Brain microvascular endothelial cell (primary cell): ENCODE measurements at regions of chr11 and their contacts with region 1.

Region 1: GRCh38 chr11:128624269-128625175 is 37.2 kb upstream of the ETS1 start:
- DNase-seq: no peak
- H3K4me3 ChIP-seq: no peak overlapping the region
- H3K27ac ChIP-seq: no peak overlapping the region
- H3K27me3 ChIP-seq: no peaks in the 10 kb centered on the region
- CTCF ChIP-seq: no peak

Region 2: GRCh38 chr11:128522055-128522942 is 102.2 kb before region 1 on chr11:
- in situ Hi-C with region 1: loop called (anchors 10 kb)
- DNase-seq: peak; percentile 99
- H3K4me3 ChIP-seq: peak overlapping the region; percentile 89
- H3K27ac ChIP-seq: peak overlapping the region; percentile 99
- H3K27me3 ChIP-seq: no peaks in the 10 kb centered on the region
- CTCF ChIP-seq: no peak